BJ (cell line): ENCODE measurements at regions of chr3 and their contacts with region 1.

Region 1: DNA sequence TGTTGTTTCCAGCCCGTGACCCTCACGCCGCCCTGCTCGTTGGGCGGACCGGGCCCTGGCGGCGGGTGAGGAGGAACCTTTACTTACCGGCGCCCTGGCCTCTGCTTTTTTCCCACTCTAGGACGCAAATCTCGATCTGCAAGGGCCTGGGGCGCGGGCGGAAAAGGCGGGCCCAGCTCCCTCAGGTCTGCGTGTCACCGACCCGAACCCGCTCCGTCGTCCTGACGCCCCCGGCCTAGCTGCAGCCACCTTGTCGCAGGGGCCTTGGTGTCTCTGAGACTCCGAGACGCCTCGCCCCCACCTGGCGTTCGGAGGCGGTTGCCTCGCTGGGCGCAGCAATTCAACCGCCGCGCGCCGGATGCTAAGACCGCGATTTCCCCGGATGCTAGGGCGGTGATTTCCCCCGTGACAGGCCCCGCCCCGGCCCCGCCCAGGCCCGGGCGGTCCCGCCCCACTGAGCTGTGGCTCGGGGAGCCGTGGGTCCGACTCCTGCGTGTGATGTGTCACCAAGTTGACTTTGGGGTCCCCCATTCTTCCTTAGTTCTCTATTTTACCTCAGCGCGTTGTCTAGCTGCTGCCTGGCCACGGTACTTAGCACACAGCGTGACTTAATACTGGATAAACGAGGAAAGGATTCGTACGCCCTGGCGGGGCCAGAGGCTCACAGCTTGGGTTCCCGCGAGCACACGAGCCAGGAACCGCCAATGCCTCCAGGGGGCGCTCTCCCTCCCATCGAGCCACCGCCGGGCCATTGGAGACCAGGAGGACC is at the start of gene RPL39L:
- DNase-seq: peak; percentile 23
- H3K4me3 ChIP-seq: peak within 1 kb of the TSS; percentile 74
- H3K27me3 ChIP-seq: peaks cover 3% of the 10 kb centered on the region
- CTCF ChIP-seq: peak; percentile 96
- polyA plus RNA-seq, gene RPL39L: 16.2 and 23.3 TPM in 2 replicates

Region 2: DNA sequence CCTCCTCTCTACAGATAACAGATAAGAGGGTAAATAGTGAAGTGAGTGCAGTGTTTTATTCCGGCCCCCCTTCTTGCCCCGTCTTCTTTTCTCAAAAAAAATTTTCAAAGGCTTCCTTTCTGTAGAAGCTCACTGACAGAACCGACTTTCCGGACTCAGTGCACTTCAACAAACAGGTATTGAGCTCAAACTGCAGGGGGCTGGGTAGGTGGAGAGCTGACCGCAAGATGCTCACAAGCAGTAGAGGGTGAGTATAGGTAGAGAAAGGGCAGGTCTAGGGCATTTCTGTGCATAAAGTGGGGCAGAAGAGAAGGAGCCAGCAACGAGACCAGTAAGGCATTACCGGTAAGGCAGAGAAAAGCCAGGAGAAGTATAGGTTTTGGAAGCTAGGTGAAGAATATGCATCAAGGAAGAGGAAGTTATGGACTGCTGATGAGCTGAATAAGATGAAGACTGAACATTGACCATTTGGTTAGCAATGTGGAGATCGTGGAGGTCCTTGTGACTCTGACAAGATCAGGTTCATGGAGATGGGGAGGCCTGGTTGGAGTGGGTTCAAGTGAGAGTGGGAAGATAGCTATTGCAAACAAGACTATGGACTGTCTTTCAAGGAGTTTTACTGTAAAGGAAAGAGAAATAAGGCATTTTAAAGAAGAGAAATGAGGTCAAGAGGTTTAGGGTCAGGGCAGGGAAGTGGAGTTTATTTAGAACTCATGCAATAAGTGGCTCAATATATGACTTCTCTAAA is 111.6 kb before region 1 on chr3:
- CTCF ChIA-PET with region 1: no interaction called
- POLR2A ChIA-PET with region 1: no interaction called
- DNase-seq: no peak
- H3K4me3 ChIP-seq: no peak overlapping the region
- H3K27me3 ChIP-seq: no peaks in the 10 kb centered on the region
- CTCF ChIP-seq: no peak

Region 3: GRCh38 chr3:187085021-187085666 is 54.2 kb before region 1 on chr3:
- CTCF ChIA-PET with region 1: no interaction called
- POLR2A ChIA-PET with region 1: no interaction called
- DNase-seq: no peak
- H3K4me3 ChIP-seq: no peak overlapping the region
- H3K27me3 ChIP-seq: no peaks in the 10 kb centered on the region
- CTCF ChIP-seq: no peak

Region 4: GRCh38 chr3:187112934-187113793 is 26.1 kb before region 1 on chr3:
- CTCF ChIA-PET with region 1: interaction called, 22 read pairs
- POLR2A ChIA-PET with region 1: no interaction called
- DNase-seq: no peak
- H3K4me3 ChIP-seq: no peak overlapping the region
- H3K27me3 ChIP-seq: no peaks in the 10 kb centered on the region
- CTCF ChIP-seq: peak; percentile 56

Region 5: DNA sequence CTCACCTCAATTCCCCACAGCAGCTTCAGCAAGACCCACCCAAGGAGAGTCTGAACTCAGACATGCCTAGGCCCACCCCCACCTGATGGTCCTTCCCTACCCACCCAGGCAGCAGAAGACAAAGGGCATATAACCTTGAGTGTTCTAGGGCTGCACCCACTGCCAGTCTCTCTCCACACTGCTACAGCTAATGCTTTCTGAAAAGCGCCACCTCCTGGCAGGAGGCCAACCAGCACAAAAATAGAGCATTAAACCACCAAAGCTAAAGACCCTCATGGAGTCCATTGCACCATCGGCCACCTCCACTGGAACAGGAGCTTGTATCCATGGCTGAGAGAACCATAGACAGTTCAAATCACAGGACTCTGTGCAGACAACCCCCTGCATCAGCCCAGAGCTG is 11.3 kb after region 1 on chr3:
- CTCF ChIA-PET with region 1: interaction called, 41 read pairs
- POLR2A ChIA-PET with region 1: no interaction called
- DNase-seq: no peak
- H3K4me3 ChIP-seq: no peak overlapping the region
- H3K27me3 ChIP-seq: 0 out of 2 replicates have a peak, but pooled peaks cover 2% of the 10 kb centered on the region
- CTCF ChIP-seq: 0 out of 2 replicates have a peak, but pooled peaks have one; percentile 2

Region 6: GRCh38 chr3:187567661-187568121 is 428.4 kb after region 1 on chr3:
- CTCF ChIA-PET with region 1: no interaction called
- POLR2A ChIA-PET with region 1: no interaction called
- DNase-seq: peak; percentile 90
- H3K4me3 ChIP-seq: no peak overlapping the region
- H3K27me3 ChIP-seq: no peaks in the 10 kb centered on the region
- CTCF ChIP-seq: no peak